ENCODE measurements at regions of chr5 and their contacts with region 1.

Region 1: GRCh38 chr5:134225618-134226440 is at the start of gene PPP2CA:
- DNase-seq: peak; percentile 98 to 100 (median 99)
- H3K4me3 ChIP-seq: peak within 1 kb of the TSS; percentile 85
- H3K4me3 Mint-ChIP-seq: peak within 1 kb of the TSS; percentile 94 to 100 (median 96)
- H3K27ac ChIP-seq: peak within 1 kb of the TSS; percentile 99
- H3K27ac Mint-ChIP-seq: peak within 1 kb of the TSS; percentile 98 to 100 (median 99)
- H3K4me1 ChIP-seq: peaks cover 41% of the 10 kb centered on the region
- H3K4me1 Mint-ChIP-seq: peaks cover 46 to 59% (median 56%) of the 10 kb centered on the region in 3 donors
- H3K27me3 ChIP-seq: no peaks in the 10 kb centered on the region
- H3K27me3 Mint-ChIP-seq: peaks cover 0 to 3% of the 10 kb centered on the region in 2 donors
- total RNA-seq, gene PPP2CA: 189 to 210 TPM

Region 2: GRCh38 chr5:134004592-134005375 is 221.0 kb before region 1 on chr5 and contains the start of gene VDAC1:
- CTCF ChIA-PET with region 1: no interaction called
- POLR2A ChIA-PET with region 1: interaction called, 15 read pairs
- DNase-seq: peak; percentile 81 to 93 (median 90)
- H3K4me3 ChIP-seq: peak within 1 kb of the TSS; percentile 66
- H3K4me3 Mint-ChIP-seq: peak within 1 kb of the TSS; percentile 89 to 98 (median 94)
- H3K27ac ChIP-seq: peak within 1 kb of the TSS; percentile 94
- H3K27ac Mint-ChIP-seq: peak within 1 kb of the TSS; percentile 94 to 99 (median 98)
- H3K4me1 ChIP-seq: peaks cover 39% of the 10 kb centered on the region
- H3K4me1 Mint-ChIP-seq: peaks cover 35 to 51% (median 48%) of the 10 kb centered on the region in 3 donors
- H3K27me3 ChIP-seq: no peaks in the 10 kb centered on the region
- H3K27me3 Mint-ChIP-seq: no peaks in the 10 kb centered on the region
- total RNA-seq, gene VDAC1: 409 to 422 TPM

Region 3: GRCh38 chr5:134184155-134185135 is 41.4 kb before region 1 on chr5:
- CTCF ChIA-PET with region 1: interaction called, 31 read pairs
- POLR2A ChIA-PET with region 1: interaction called, 6 read pairs
- DNase-seq: peak; percentile 64 to 85 (median 68)
- H3K4me3 ChIP-seq: no peak overlapping the region
- H3K4me3 Mint-ChIP-seq: peak overlapping the region in 1 of 7 donors; percentile 43
- H3K27ac ChIP-seq: no peak overlapping the region
- H3K27ac Mint-ChIP-seq: peak overlapping the region in 2 of 8 donors; percentile 22 to 29
- H3K4me1 ChIP-seq: no peaks in the 10 kb centered on the region
- H3K4me1 Mint-ChIP-seq: no peaks in the 10 kb centered on the region
- H3K27me3 ChIP-seq: no peaks in the 10 kb centered on the region
- H3K27me3 Mint-ChIP-seq: peaks cover 0 to 1% of the 10 kb centered on the region in 2 donors

Region 4: GRCh38 chr5:134267366-134268018 is 41.7 kb after region 1 on chr5:
- CTCF ChIA-PET with region 1: no interaction called
- POLR2A ChIA-PET with region 1: interaction called, 10 read pairs
- DNase-seq: no peak
- H3K4me3 ChIP-seq: no peak overlapping the region
- H3K4me3 Mint-ChIP-seq: no peak overlapping the region
- H3K27ac ChIP-seq: no peak overlapping the region
- H3K27ac Mint-ChIP-seq: no peak overlapping the region
- H3K4me1 ChIP-seq: no peaks in the 10 kb centered on the region
- H3K4me1 Mint-ChIP-seq: no peaks in the 10 kb centered on the region
- H3K27me3 ChIP-seq: no peaks in the 10 kb centered on the region
- H3K27me3 Mint-ChIP-seq: peaks cover 11 to 16% of the 10 kb centered on the region in 2 donors

Region 5: DNA sequence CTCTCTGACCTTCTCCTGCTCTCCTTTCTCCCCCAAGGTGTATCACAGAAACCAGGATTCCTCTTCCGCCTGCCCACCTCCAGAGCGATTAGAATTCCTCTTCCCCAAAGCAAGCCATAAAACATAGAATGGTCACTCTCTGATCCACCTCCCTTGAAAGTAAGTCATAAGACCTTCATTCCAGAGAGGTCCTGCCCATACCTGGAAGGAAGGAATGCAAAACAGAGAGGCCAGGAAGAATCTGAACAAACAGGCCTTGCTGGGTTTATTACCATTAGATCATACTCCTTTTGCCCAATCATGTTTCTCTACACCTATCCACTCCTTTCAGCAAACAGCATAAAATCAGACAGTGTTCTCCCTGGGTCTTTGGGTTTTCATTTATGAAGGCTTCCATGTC is 120.2 kb after region 1 on chr5:
- CTCF ChIA-PET with region 1: no interaction called
- POLR2A ChIA-PET with region 1: no interaction called
- DNase-seq: no peak
- H3K4me3 ChIP-seq: no peak overlapping the region
- H3K4me3 Mint-ChIP-seq: no peak overlapping the region
- H3K27ac ChIP-seq: no peak overlapping the region
- H3K27ac Mint-ChIP-seq: no peak overlapping the region
- H3K4me1 ChIP-seq: no peaks in the 10 kb centered on the region
- H3K4me1 Mint-ChIP-seq: no peaks in the 10 kb centered on the region
- H3K27me3 ChIP-seq: no peaks in the 10 kb centered on the region
- H3K27me3 Mint-ChIP-seq: peaks cover 0 to 1% of the 10 kb centered on the region in 2 donors

Region 6: GRCh38 chr5:134527146-134527960 is 301.5 kb after region 1 on chr5:
- CTCF ChIA-PET with region 1: no interaction called
- POLR2A ChIA-PET with region 1: interaction called, 26 read pairs
- DNase-seq: peak; percentile 66 to 80 (median 70)
- H3K4me3 ChIP-seq: peak overlapping the region; percentile 90
- H3K4me3 Mint-ChIP-seq: peak overlapping the region; percentile 94 to 99 (median 98)
- H3K27ac ChIP-seq: peak overlapping the region; percentile 84
- H3K27ac Mint-ChIP-seq: peak overlapping the region; percentile 80 to 99 (median 88)
- H3K4me1 ChIP-seq: peaks cover 56% of the 10 kb centered on the region
- H3K4me1 Mint-ChIP-seq: peaks cover 52 to 61% (median 56%) of the 10 kb centered on the region in 3 donors
- H3K27me3 ChIP-seq: no peaks in the 10 kb centered on the region
- H3K27me3 Mint-ChIP-seq: peaks cover 0 to 7% of the 10 kb centered on the region in 2 donors

Measured in CD8-positive, alpha-beta memory T cell (primary cell).